ENCODE measurements at regions of chr3 and their contacts with region 1.

Region 1: DNA sequence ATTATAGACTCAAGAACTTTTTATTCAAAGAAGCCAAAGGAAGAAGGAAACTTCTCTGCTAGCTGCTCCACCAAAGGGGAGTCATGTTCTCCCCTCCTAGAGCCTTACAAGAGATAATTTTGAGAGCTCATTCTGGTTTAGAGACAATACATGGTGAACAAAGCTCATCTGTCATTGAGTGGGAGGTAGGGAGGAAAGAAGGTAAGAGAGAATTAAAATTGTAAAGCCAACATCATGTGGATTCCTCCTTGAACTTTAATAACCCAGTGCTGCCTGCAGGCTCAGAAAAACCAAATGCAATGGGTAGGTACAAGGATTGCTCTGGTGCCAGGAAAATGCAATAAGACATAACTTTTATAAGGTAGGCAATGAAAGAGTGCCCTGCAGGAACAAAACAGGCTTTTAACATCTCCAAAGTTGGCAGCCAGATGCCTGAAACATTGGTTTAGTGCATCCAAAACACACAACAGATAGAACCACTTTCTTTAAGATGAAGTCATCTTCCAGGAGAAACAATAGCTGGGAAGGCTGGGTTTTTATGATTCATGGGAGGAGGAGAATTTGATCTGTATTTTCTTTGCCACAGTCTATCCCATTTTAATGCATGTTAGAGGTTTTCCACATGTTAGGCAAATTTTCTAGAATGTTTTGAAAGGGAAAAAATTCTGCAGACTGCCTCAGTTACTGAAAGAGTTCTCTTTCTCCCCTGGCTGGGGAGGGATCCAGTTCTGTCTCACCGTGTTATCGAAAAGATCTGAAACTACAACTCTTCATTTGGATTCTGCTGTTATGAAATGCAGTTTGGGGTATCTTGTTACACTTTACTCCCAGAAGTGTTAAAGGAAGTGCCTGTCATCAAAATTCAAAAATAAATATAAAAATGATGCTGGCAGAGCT is 11.3 kb upstream of the ARHGEF3 start:
- DNase-seq: peak; percentile 84
- ATAC-seq: peak; percentile 78
- H3K4me3 ChIP-seq: peak overlapping the region; percentile 21; the same call in 1 of the 2 replicates
- H3K27ac ChIP-seq: peak overlapping the region; percentile 75
- H3K4me1 ChIP-seq: peaks cover 41% of the 10 kb centered on the region
- H3K27me3 ChIP-seq: no peaks in the 10 kb centered on the region
- CTCF ChIP-seq: no peak

Region 2: GRCh38 chr3:56677286-56677685 is 135.7 kb before region 1 on chr3:
- CTCF ChIA-PET with region 1: no interaction called
- POLR2A ChIA-PET with region 1: no interaction called
- intact Hi-C with region 1: no loop called
- DNase-seq: no peak
- ATAC-seq: no peak
- H3K4me3 ChIP-seq: no peak overlapping the region
- H3K27ac ChIP-seq: no peak overlapping the region
- H3K4me1 ChIP-seq: peaks cover 25% of the 10 kb centered on the region
- H3K27me3 ChIP-seq: no peaks in the 10 kb centered on the region
- CTCF ChIP-seq: no peak

Region 3: GRCh38 chr3:56801662-56802377 is 11.2 kb before region 1 on chr3 and contains the start of gene ARHGEF3:
- CTCF ChIA-PET with region 1: interaction called, 5 read pairs
- POLR2A ChIA-PET with region 1: interaction called, 24 read pairs
- intact Hi-C with region 1: loop called (anchors 1 kb)
- DNase-seq: peak; percentile 88
- ATAC-seq: peak; percentile 91
- H3K4me3 ChIP-seq: peak within 1 kb of the TSS; percentile 73
- H3K27ac ChIP-seq: 0 out of 2 replicates have a peak within 1 kb of the TSS, but pooled peaks have one; percentile 31
- H3K4me1 ChIP-seq: peaks cover 21% of the 10 kb centered on the region
- H3K27me3 ChIP-seq: no peaks in the 10 kb centered on the region
- CTCF ChIP-seq: peak; percentile 71
- total RNA-seq, gene ARHGEF3: 8.7 and 12.6 TPM in 2 replicates

Region 4: GRCh38 chr3:56862352-56863074 is 49.5 kb after region 1 on chr3:
- CTCF ChIA-PET with region 1: no interaction called
- POLR2A ChIA-PET with region 1: no interaction called
- intact Hi-C with region 1: loop called (anchors 2 kb)
- DNase-seq: peak; percentile 85
- ATAC-seq: peak; percentile 91
- H3K4me3 ChIP-seq: no peak overlapping the region
- H3K27ac ChIP-seq: peak overlapping the region; percentile 51
- H3K4me1 ChIP-seq: peaks cover 12% of the 10 kb centered on the region
- H3K27me3 ChIP-seq: no peaks in the 10 kb centered on the region
- CTCF ChIP-seq: no peak

Region 5: DNA sequence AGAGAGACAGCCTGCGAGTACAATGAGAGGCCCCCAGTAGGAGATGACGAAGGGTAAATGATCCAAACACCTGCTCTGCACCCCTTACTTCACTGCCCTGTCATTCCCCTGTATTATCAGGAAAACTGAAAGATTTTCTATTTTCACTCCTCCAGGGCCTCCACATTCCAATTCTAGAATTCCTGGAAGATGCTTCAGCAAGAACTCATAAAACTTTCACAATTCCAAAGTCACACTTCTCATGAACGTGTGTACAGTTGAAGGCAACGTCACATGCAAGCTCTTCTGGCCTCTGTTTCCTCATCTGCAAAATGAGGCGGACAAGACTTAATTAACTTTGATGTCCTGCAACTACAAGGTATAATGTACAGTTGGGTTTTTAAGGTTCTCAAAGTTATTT is 184.7 kb after region 1 on chr3:
- CTCF ChIA-PET with region 1: interaction called, 15 read pairs
- POLR2A ChIA-PET with region 1: no interaction called
- intact Hi-C with region 1: no loop called
- DNase-seq: no peak
- ATAC-seq: peak; percentile 35
- H3K4me3 ChIP-seq: no peak overlapping the region
- H3K27ac ChIP-seq: no peak overlapping the region
- H3K4me1 ChIP-seq: peaks cover 16% of the 10 kb centered on the region
- H3K27me3 ChIP-seq: no peaks in the 10 kb centered on the region
- CTCF ChIP-seq: no peak

Measured in PC-3 (cell line).